ENCODE measurements at regions of chr12 and their contacts with region 1.

Region 1: GRCh38 chr12:13196130-13196921 is at the start of gene EMP1:
- DNase-seq: peak; percentile 68
- ATAC-seq: peak; percentile 90
- H3K4me3 ChIP-seq: peak within 1 kb of the TSS in 4 of 5 experiments; percentile 3 to 61 (median 44)
- H3K4me3 Mint-ChIP-seq: peak within 1 kb of the TSS; percentile 80
- H3K27ac ChIP-seq: peak within 1 kb of the TSS in 1 of 2 donors; percentile 13
- H3K27ac Mint-ChIP-seq: peak within 1 kb of the TSS; percentile 65
- H3K4me1 ChIP-seq: peaks cover 15 to 19% of the 10 kb centered on the region in 2 donors
- H3K4me1 Mint-ChIP-seq: peaks cover 30% of the 10 kb centered on the region
- H3K27me3 ChIP-seq: peaks cover 0 to 16% (median 3%) of the 10 kb centered on the region in 4 experiments
- H3K27me3 Mint-ChIP-seq: peaks cover 55% of the 10 kb centered on the region
- CTCF ChIP-seq: no peak
- total RNA-seq, gene EMP1: 0.64 and 0.83 TPM in 2 replicates

Region 2: GRCh38 chr12:13100882-13101769 is 95.2 kb before region 1 on chr12:
- CTCF ChIA-PET with region 1: interaction called, 4 read pairs
- POLR2A ChIA-PET with region 1: interaction called, 3 read pairs
- intact Hi-C with region 1: loop called (anchors 1 kb)
- DNase-seq: peak; percentile 97
- ATAC-seq: peak; percentile 77
- H3K4me3 ChIP-seq: peak overlapping the region; percentile 39 to 82 (median 71)
- H3K4me3 Mint-ChIP-seq: peak overlapping the region; percentile 88
- H3K27ac ChIP-seq: peak overlapping the region; percentile 97 to 99
- H3K27ac Mint-ChIP-seq: peak overlapping the region; percentile 96
- H3K4me1 ChIP-seq: peaks cover 52 to 63% of the 10 kb centered on the region in 2 donors
- H3K4me1 Mint-ChIP-seq: peaks cover 62% of the 10 kb centered on the region
- H3K27me3 ChIP-seq: no peaks in the 10 kb centered on the region
- H3K27me3 Mint-ChIP-seq: no peaks in the 10 kb centered on the region
- CTCF ChIP-seq: no peak

Region 3: GRCh38 chr12:13161172-13161571 is 35.2 kb before region 1 on chr12:
- CTCF ChIA-PET with region 1: no interaction called
- POLR2A ChIA-PET with region 1: no interaction called
- intact Hi-C with region 1: loop called (anchors 5 kb)
- DNase-seq: no peak
- ATAC-seq: no peak
- H3K4me3 ChIP-seq: no peak overlapping the region
- H3K4me3 Mint-ChIP-seq: no peak overlapping the region
- H3K27ac ChIP-seq: no peak overlapping the region
- H3K27ac Mint-ChIP-seq: no peak overlapping the region
- H3K4me1 ChIP-seq: peaks cover 10% of the 10 kb centered on the region in 2 donors
- H3K4me1 Mint-ChIP-seq: peaks cover 13% of the 10 kb centered on the region
- H3K27me3 ChIP-seq: no peaks in the 10 kb centered on the region
- H3K27me3 Mint-ChIP-seq: peaks cover 5% of the 10 kb centered on the region
- CTCF ChIP-seq: peak; percentile 43

Region 4: GRCh38 chr12:13173012-13173932 is 23.1 kb before region 1 on chr12:
- CTCF ChIA-PET with region 1: no interaction called
- POLR2A ChIA-PET with region 1: no interaction called
- intact Hi-C with region 1: loop called (anchors 2 kb)
- DNase-seq: peak; percentile 46
- ATAC-seq: peak; percentile 79
- H3K4me3 ChIP-seq: no peak overlapping the region
- H3K4me3 Mint-ChIP-seq: no peak overlapping the region
- H3K27ac ChIP-seq: no peak overlapping the region
- H3K27ac Mint-ChIP-seq: no peak overlapping the region
- H3K4me1 ChIP-seq: peaks cover 10 to 18% of the 10 kb centered on the region in 2 donors
- H3K4me1 Mint-ChIP-seq: peaks cover 17% of the 10 kb centered on the region
- H3K27me3 ChIP-seq: peaks cover 0 to 20% (median 4%) of the 10 kb centered on the region in 4 experiments
- H3K27me3 Mint-ChIP-seq: peaks cover 42% of the 10 kb centered on the region
- CTCF ChIP-seq: no peak

Region 5: GRCh38 chr12:13293096-13293495 is 96.8 kb after region 1 on chr12:
- CTCF ChIA-PET with region 1: no interaction called
- POLR2A ChIA-PET with region 1: no interaction called
- intact Hi-C with region 1: no loop called
- DNase-seq: no peak
- ATAC-seq: no peak
- H3K4me3 ChIP-seq: no peak overlapping the region
- H3K4me3 Mint-ChIP-seq: no peak overlapping the region
- H3K27ac ChIP-seq: no peak overlapping the region
- H3K27ac Mint-ChIP-seq: no peak overlapping the region
- H3K4me1 ChIP-seq: no peaks in the 10 kb centered on the region
- H3K4me1 Mint-ChIP-seq: no peaks in the 10 kb centered on the region
- H3K27me3 ChIP-seq: no peaks in the 10 kb centered on the region
- H3K27me3 Mint-ChIP-seq: peaks cover 2% of the 10 kb centered on the region
- CTCF ChIP-seq: no peak